AG04450 (cell line): ENCODE measurements at regions of chr14 and their contacts with region 1.

Region 1: DNA sequence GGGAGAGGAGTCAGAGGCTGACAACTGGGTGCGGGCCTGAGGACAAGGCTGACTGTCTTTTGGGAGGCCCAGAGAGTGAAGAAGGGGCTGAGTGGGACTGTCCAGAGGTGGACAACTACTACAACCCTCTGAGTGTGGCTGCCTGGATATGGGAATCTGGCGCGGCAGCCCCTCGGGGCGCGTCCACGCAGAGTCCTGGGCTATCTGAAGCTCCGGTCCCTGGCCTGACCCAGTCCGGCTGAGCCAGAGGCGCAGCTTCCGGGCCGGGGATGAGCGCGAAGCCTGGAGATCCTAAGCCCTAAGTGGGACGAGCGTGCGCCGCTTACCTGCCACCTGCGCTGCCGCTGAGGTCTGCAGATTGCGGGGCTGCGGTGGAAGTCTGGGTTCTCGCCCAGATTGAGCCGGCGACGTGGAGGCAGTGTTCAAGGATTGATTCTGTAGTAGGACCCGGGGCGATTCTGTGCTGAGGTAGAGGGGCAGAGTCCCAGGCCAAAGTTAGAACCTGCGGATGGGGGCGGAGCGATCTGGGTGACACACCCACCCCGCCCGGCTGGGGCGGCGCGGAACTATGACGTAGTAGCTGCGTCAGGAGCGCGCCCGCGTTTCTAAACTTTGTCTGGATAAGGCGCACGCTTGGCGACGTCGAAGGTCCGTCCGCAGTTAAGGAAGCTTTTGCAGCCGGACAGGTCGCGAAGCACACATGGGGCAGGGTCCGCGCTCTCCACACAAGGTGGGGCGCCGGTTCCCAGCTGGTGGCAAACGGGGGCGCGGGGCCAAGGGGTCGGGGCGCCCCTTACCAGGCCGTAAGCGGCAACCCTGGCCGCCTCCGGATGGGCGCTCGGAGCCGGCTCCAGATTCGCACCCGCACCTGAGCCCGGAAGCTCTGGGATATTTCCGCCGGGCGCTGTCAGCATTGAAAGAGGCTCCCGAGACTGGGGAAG is at the starts of genes DHRS1 and NOP9:
- DNase-seq: peak; percentile 54
- H3K4me3 ChIP-seq: peak within 1 kb of the TSS; percentile 96
- H3K27ac ChIP-seq: peak within 1 kb of the TSS; percentile 57
- H3K27me3 ChIP-seq: no peaks in the 10 kb centered on the region
- CTCF ChIP-seq: no peak
- polyA plus RNA-seq, gene DHRS1: 33.8 and 36.6 TPM in 2 replicates
- polyA plus RNA-seq, gene NOP9: 12.0 and 13.7 TPM in 2 replicates

Region 2: DNA sequence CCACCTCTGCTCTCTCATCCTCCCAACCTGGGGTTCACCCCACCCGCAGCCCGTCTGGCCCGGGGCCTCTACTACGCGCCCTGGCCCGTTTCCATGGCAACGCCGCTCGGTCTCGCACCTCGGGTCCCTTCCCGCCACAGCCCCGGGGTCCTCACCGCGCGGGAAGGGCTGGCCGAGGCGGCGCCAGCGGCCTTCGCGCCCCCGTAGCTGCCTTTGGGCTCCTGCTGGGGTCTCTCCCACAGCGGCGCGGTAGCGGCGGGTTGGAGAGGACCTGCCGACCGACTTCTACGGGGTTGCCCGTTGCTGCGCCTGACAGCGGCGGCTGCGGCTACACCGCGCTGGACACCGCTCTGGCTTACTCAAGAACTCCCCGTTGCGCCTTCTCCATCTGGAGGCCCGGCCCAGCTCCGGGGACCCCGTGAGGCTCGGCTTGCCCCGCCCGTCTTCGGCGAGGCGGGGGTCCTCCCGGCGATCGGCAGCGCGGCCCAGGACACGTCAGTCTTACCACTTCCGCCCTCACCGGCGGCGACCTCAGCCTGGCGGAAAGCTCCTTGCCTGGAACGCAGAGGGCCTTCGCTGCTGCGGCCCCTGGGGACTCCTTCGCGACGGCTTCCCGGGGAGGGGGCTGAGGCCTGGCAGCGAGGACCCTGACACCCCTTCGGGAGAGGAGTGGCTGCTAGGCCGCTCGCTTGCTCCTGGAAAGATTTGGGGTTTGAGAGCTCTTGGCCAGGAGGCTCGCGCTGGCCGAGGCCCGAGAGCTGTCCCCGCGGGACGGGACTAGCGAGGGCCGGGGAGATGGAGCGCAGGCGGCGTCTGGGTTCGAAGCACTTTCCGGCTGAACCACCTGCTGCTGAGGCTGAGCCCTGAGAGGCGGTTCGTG is 104.1 kb before region 1 on chr14 and contains the start of gene TM9SF1:
- CTCF ChIA-PET with region 1: interaction called, 24 read pairs
- POLR2A ChIA-PET with region 1: interaction called, 11 read pairs
- DNase-seq: peak; percentile 64
- H3K4me3 ChIP-seq: peak within 1 kb of the TSS; percentile 87
- H3K27ac ChIP-seq: peak within 1 kb of the TSS; percentile 94
- H3K27me3 ChIP-seq: no peaks in the 10 kb centered on the region
- CTCF ChIP-seq: no peak
- polyA plus RNA-seq, gene TM9SF1: 41.7 and 44.9 TPM in 2 replicates

Region 3: DNA sequence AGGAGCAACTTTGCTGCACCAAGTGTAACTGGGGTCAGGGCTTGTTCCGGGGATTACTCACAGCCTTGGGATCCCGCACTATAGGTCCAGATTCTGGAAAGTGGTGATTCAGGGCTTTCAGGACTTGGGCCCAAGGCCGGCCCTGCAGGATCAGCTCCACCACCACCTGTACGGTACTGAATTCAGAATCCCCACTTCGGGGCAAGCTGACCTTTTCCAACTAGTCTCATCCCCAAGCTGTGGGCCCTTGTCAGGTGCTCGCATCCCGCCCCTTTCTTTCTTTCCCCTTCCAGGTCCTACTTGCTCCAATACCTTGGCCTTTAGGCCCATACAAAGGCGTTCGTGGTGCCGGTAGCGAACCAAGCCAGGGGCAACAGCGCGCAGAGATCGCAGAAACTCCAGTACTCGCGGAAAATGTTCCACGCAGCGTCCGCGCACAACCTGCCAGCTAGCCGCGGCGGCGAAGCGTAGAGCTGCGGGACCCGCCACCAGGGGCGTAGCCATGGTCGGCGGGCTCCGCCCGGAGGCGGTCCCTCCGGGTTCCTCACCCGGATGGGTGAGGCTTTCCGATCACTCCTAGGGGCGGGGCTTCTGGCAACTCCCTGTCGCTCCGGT is 57.6 kb before region 1 on chr14:
- CTCF ChIA-PET with region 1: interaction called, 84 read pairs
- POLR2A ChIA-PET with region 1: interaction called, 14 read pairs
- DNase-seq: peak; percentile 72
- H3K4me3 ChIP-seq: peak overlapping the region; percentile 92
- H3K27ac ChIP-seq: peak overlapping the region; percentile 99
- H3K27me3 ChIP-seq: no peaks in the 10 kb centered on the region
- CTCF ChIP-seq: peak; percentile 55

Region 4: GRCh38 chr14:24271134-24271833 is 28.2 kb before region 1 on chr14 and contains the start of gene RABGGTA:
- CTCF ChIA-PET with region 1: interaction called, 19 read pairs
- POLR2A ChIA-PET with region 1: interaction called, 9 read pairs
- DNase-seq: peak; percentile 66
- H3K4me3 ChIP-seq: peak within 1 kb of the TSS; percentile 88
- H3K27ac ChIP-seq: peak within 1 kb of the TSS; percentile 87
- H3K27me3 ChIP-seq: no peaks in the 10 kb centered on the region
- CTCF ChIP-seq: peak; percentile 67
- polyA plus RNA-seq, gene RABGGTA: 17.9 and 24.7 TPM in 2 replicates

Region 5: GRCh38 chr14:24442273-24443052 is 142.9 kb after region 1 on chr14 and contains the start of gene SDR39U1:
- CTCF ChIA-PET with region 1: no interaction called
- POLR2A ChIA-PET with region 1: no interaction called
- DNase-seq: peak; percentile 98
- H3K4me3 ChIP-seq: peak within 1 kb of the TSS; percentile 94
- H3K27ac ChIP-seq: peak within 1 kb of the TSS; percentile 100
- H3K27me3 ChIP-seq: no peaks in the 10 kb centered on the region
- CTCF ChIP-seq: no peak
- polyA plus RNA-seq, gene SDR39U1: 22.9 and 24.9 TPM in 2 replicates